BJ (cell line): ENCODE measurements at regions of chr1 and their contacts with region 1.

Region 1: GRCh38 chr1:50747394-50747793 is 212.7 kb downstream of the FAF1 start:
- DNase-seq: no peak
- H3K4me3 ChIP-seq: no peak overlapping the region
- H3K27me3 ChIP-seq: no peaks in the 10 kb centered on the region
- CTCF ChIP-seq: no peak

Region 2: GRCh38 chr1:50717327-50717726 is 30.1 kb before region 1 on chr1:
- CTCF ChIA-PET with region 1: no interaction called
- POLR2A ChIA-PET with region 1: no interaction called
- DNase-seq: no peak
- H3K4me3 ChIP-seq: no peak overlapping the region
- H3K27me3 ChIP-seq: no peaks in the 10 kb centered on the region
- CTCF ChIP-seq: no peak

Region 3: GRCh38 chr1:50766688-50767087 is 19.3 kb after region 1 on chr1:
- CTCF ChIA-PET with region 1: no interaction called
- POLR2A ChIA-PET with region 1: interaction called, 11 read pairs
- DNase-seq: no peak
- H3K4me3 ChIP-seq: no peak overlapping the region
- H3K27me3 ChIP-seq: no peaks in the 10 kb centered on the region
- CTCF ChIP-seq: no peak